CD14-positive monocyte (primary cell): ENCODE measurements at regions of chr4 and their contacts with region 1.

Region 1: GRCh38 chr4:147617173-147617840 is at the start of gene TMEM184C:
- DNase-seq: peak; percentile 94
- H3K4me3 ChIP-seq: peak within 1 kb of the TSS; percentile 66 to 89 (median 83)
- H3K4me3 Mint-ChIP-seq: peak within 1 kb of the TSS; percentile 99 to 100
- H3K27ac ChIP-seq: peak within 1 kb of the TSS; percentile 87 to 97
- H3K27ac Mint-ChIP-seq: peak within 1 kb of the TSS; percentile 97 to 100 (median 99)
- H3K4me1 ChIP-seq: peaks cover 23 to 34% of the 10 kb centered on the region in 2 donors
- H3K4me1 Mint-ChIP-seq: peaks cover 33% of the 10 kb centered on the region
- H3K27me3 ChIP-seq: peaks cover 0 to 10% of the 10 kb centered on the region in 2 donors
- H3K27me3 Mint-ChIP-seq: peaks cover 2 to 9% (median 2%) of the 10 kb centered on the region in 3 donors
- CTCF ChIP-seq: no peak
- polyA plus RNA-seq, gene TMEM184C: 7.5 to 36.4 (median 20.7) TPM

Region 2: DNA sequence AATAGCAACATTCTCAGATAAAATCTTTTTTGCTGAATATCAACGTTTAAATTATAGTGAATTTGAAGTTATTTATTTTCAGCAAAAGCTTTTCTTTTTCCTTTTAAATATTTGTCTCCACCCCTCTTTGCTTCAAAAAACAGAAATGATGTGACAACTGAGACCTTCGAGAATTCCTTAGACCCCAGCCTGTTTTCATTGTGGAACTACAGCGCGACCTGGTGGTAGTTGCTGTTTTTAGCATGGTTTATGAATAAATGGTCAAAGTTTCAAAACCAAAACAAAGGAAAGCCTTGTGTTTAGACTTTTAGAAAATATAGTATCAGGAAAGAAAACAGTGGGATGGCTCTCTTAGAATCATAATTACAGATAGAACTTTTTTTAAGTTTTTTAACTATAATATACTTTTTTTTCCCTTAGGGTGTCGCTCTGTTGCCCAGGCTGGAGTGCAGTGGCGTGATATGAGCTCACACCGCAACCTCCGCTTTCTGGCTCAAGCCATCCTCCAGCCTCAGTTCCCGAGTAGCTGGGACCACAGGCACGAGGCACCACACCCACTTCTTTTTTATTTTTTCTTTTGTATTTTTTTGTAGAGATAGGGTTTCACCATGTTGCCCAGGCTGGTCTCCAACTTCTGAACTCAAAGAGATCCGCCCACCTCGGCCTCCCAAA is 26.9 kb before region 1 on chr4:
- intact Hi-C with region 1: no loop called
- DNase-seq: peak in 1 of 3 donors; percentile 7
- H3K4me3 ChIP-seq: no peak overlapping the region
- H3K4me3 Mint-ChIP-seq: no peak overlapping the region
- H3K27ac ChIP-seq: no peak overlapping the region
- H3K27ac Mint-ChIP-seq: no peak overlapping the region
- H3K4me1 ChIP-seq: no peaks in the 10 kb centered on the region
- H3K4me1 Mint-ChIP-seq: no peaks in the 10 kb centered on the region
- H3K27me3 ChIP-seq: no peaks in the 10 kb centered on the region
- H3K27me3 Mint-ChIP-seq: peaks cover 0 to 6% (median 0%) of the 10 kb centered on the region in 3 donors
- CTCF ChIP-seq: peak; percentile 77

Region 3: DNA sequence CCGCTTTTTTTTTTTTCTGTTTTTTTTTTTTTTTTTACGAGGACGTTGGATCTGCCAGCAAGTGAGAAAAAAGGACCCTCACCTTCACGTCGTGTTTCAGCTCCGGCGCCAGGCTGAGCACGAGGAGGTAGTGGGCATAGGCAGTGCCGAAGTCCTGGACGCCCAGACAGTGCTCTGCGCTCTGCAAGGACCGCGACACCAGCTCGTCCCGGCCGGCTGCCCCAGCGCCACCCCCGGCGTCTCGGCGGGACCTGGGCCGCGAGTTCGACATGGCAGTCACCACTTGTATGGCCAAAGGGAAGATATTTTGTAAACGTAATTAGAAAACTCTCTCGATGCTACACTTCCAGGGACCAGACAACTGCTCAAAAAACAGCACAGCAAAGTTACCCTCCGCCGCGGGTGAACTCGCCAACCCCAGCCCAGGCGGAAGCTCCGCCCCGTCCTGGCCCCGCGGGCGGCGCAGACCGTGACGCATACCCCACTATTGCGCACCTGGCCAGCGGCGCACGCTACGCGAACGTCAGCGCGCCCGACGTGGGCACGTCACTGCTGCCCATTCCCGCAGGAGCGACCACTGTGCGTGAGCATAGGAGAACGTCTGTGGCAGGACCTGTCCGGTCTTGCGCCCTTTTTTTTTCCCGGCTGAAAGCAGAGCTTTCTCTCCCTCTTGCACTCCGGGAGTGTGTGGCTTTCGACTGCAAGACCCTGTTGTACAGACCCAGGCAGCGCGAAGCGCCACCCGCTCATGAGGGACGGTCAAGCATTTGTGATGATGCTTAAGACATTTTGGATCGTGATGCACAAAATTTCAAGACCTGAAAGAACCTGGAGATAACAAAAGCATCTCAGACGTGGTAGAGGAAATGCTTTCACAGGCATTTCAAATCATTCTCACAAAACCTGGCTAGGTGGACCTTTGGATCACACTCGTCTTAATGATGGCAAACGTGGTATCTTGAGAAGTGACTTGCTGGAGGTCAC is 66.7 kb after region 1 on chr4 and contains the start of gene PRMT9:
- intact Hi-C with region 1: loop called in 1 of 2 experiments (anchors 5 kb)
- DNase-seq: peak; percentile 89 to 92 (median 89)
- H3K4me3 ChIP-seq: peak within 1 kb of the TSS; percentile 85 to 88 (median 87)
- H3K4me3 Mint-ChIP-seq: peak within 1 kb of the TSS; percentile 87 to 97
- H3K27ac ChIP-seq: peak within 1 kb of the TSS; percentile 81 to 95
- H3K27ac Mint-ChIP-seq: peak within 1 kb of the TSS; percentile 89 to 97 (median 95)
- H3K4me1 ChIP-seq: peaks cover 11 to 18% of the 10 kb centered on the region in 2 donors
- H3K4me1 Mint-ChIP-seq: peaks cover 15% of the 10 kb centered on the region
- H3K27me3 ChIP-seq: no peaks in the 10 kb centered on the region
- H3K27me3 Mint-ChIP-seq: peaks cover 0 to 8% (median 4%) of the 10 kb centered on the region in 3 donors
- CTCF ChIP-seq: no peak
- polyA plus RNA-seq, gene PRMT9: 1.6 to 4.6 (median 2.0) TPM